Endothelial cell of umbilical vein (primary cell): ENCODE measurements at regions of chr12 and their contacts with region 1.

Region 1: GRCh38 chr12:56751712-56752598 is at the start of gene PRIM1:
- DNase-seq: peak; percentile 81
- H3K4me3 ChIP-seq: peak within 1 kb of the TSS; percentile 52 to 98 (median 94)
- H3K27ac ChIP-seq: peak within 1 kb of the TSS; percentile 75
- H3K4me1 ChIP-seq: peaks cover 11% of the 10 kb centered on the region
- H3K27me3 ChIP-seq: no peaks in the 10 kb centered on the region
- CTCF ChIP-seq: no peak
- POLR2A ChIP-seq: peak; percentile 62
- total RNA-seq, gene PRIM1: 12.1 and 13.4 TPM in 2 replicates

Region 2: GRCh38 chr12:56661560-56661959 is 90.4 kb before region 1 on chr12:
- CTCF ChIA-PET with region 1: no interaction called
- POLR2A ChIA-PET with region 1: no interaction called
- dilution Hi-C with region 1: no loop called
- intact Hi-C with region 1: no loop called
- DNase-seq: no peak
- H3K4me3 ChIP-seq: no peak overlapping the region
- H3K27ac ChIP-seq: no peak overlapping the region
- H3K4me1 ChIP-seq: no peaks in the 10 kb centered on the region
- H3K27me3 ChIP-seq: no peaks in the 10 kb centered on the region
- CTCF ChIP-seq: no peak
- POLR2A ChIP-seq: no peak

Region 3: DNA sequence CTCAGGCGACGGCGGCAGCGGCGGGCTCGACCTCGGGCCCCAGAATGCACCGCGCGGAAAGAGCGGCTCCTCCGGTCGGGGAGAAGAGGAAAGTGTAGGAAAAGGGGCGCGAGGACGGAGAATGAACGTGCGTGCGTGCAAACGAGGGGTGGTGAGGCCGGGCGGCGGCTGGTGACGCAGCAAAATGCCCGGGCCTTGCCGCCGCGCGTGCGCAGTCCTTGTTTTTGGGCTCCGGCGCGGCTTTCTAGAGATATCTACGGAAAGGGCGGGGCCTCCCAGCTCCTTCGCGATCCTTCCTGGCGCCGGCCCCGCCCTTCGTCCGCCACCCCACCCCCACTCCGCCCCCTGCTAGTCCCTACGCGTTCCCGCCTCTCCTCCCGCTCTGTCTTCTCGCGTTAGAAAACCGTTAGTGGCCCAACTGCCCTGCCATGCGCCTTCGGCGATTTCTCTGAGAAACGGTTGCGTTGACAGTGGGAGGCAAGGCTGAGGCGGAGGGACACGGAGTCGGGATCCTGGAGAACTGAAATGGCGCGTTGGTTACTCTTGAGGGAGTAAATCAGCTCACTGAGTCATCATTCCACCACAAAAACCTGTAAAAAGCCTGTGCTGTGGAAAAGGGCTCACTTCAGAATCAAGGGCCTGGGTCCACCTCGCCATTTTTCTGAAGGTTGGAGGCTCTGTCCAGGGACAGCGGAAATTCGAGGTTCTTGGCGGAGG is 63.7 kb before region 1 on chr12 and contains the start of gene PTGES3:
- CTCF ChIA-PET with region 1: interaction called, 3 read pairs
- POLR2A ChIA-PET with region 1: interaction called, 5 read pairs
- dilution Hi-C with region 1: no loop called
- intact Hi-C with region 1: loop called (anchors 2 kb)
- DNase-seq: peak; percentile 99
- H3K4me3 ChIP-seq: peak within 1 kb of the TSS; percentile 61 to 91 (median 84)
- H3K27ac ChIP-seq: peak within 1 kb of the TSS; percentile 90
- H3K4me1 ChIP-seq: peaks cover 27% of the 10 kb centered on the region
- H3K27me3 ChIP-seq: no peaks in the 10 kb centered on the region
- CTCF ChIP-seq: peak in 1 of 2 donors; percentile 3
- POLR2A ChIP-seq: peak; percentile 88
- total RNA-seq, gene PTGES3: 262 and 278 TPM in 2 replicates

Region 4: DNA sequence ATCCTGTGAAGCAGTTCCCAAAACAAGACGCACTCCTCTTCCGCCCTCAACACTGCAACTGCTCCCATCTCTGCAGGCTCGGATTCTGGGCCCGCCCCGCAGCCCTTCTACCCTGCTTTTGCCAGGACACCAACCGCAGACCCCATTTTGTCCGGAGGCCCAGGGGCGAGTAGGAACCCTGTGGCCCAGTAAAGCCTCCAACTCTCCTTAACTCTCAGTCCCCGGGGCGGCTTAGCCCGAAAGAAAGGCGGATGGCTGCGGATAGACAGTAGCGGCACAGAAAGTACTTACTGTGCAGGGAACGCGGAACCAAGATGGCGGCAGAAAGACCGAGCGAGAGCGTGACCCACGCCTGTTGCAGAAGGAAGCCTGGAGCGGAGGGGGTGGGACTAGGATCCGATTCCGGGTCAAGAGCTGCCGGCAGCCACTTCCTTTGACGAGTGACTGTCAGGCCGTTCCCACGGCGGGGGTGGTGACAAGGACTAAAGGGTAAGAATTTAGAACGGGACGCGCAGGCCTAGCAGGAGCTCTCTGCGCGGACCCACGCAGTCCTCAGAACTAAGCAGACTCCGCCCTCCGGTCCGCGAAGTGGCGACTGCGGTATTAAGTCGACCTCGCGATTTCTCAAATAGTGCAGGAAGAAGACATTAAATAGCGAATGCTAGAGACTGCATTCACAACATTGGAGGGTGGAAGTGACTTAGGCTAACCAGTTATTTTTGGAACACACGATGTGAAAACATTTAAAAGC is 26.8 kb before region 1 on chr12 and contains the start of gene NACA:
- CTCF ChIA-PET with region 1: no interaction called
- POLR2A ChIA-PET with region 1: interaction called, 3 read pairs
- dilution Hi-C with region 1: no loop called
- intact Hi-C with region 1: loop called (anchors 1 kb)
- DNase-seq: peak; percentile 99
- H3K4me3 ChIP-seq: peak within 1 kb of the TSS; percentile 85 to 90 (median 86)
- H3K27ac ChIP-seq: peak within 1 kb of the TSS; percentile 61
- H3K4me1 ChIP-seq: peaks cover 33% of the 10 kb centered on the region
- H3K27me3 ChIP-seq: no peaks in the 10 kb centered on the region
- CTCF ChIP-seq: no peak
- POLR2A ChIP-seq: peak; percentile 91
- total RNA-seq, gene NACA: 886 and 892 TPM in 2 replicates

Region 5: DNA sequence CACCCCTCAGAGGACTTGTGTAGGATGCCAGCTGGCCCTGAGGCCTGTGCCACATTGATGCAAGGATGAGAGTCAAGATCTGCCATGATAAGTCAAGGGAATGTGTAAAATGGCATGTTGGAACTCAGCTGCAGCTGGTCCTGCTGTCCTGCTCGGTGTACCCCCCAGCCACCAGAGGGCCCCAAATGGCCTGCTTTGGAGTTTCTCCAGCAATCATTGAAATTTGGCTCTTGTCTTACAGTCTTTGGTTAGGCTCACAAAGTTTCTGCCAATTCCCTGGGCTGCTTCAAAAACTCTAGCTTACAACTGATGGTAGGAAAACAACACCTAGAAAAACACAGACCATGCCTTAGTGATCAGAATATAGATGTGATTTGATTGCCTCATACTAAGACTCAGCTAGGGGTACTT is 88.0 kb after region 1 on chr12:
- CTCF ChIA-PET with region 1: no interaction called
- POLR2A ChIA-PET with region 1: no interaction called
- dilution Hi-C with region 1: no loop called
- intact Hi-C with region 1: no loop called
- DNase-seq: peak; percentile 45
- H3K4me3 ChIP-seq: no peak overlapping the region
- H3K27ac ChIP-seq: no peak overlapping the region
- H3K4me1 ChIP-seq: no peaks in the 10 kb centered on the region
- H3K27me3 ChIP-seq: peaks cover 13 to 20% of the 10 kb centered on the region in 2 experiments
- CTCF ChIP-seq: peak; percentile 43 to 66
- POLR2A ChIP-seq: no peak

Region 6: GRCh38 chr12:56987551-56988053 is 235.6 kb after region 1 on chr12:
- CTCF ChIA-PET with region 1: interaction called, 29 read pairs
- POLR2A ChIA-PET with region 1: no interaction called
- dilution Hi-C with region 1: no loop called
- intact Hi-C with region 1: loop called (anchors 1 kb)
- DNase-seq: peak; percentile 55
- H3K4me3 ChIP-seq: no peak overlapping the region
- H3K27ac ChIP-seq: peak overlapping the region; percentile 3
- H3K4me1 ChIP-seq: peaks cover 30% of the 10 kb centered on the region
- H3K27me3 ChIP-seq: peaks cover 2 to 3% of the 10 kb centered on the region in 2 experiments
- CTCF ChIP-seq: peak; percentile 93
- POLR2A ChIP-seq: no peak

Region 7: GRCh38 chr12:57063991-57064685 is 312.2 kb after region 1 on chr12:
- CTCF ChIA-PET with region 1: interaction called, 6 read pairs
- POLR2A ChIA-PET with region 1: no interaction called
- dilution Hi-C with region 1: no loop called
- intact Hi-C with region 1: loop called (anchors 1 kb)
- DNase-seq: no peak
- H3K4me3 ChIP-seq: no peak overlapping the region
- H3K27ac ChIP-seq: no peak overlapping the region
- H3K4me1 ChIP-seq: no peaks in the 10 kb centered on the region
- H3K27me3 ChIP-seq: no peaks in the 10 kb centered on the region
- CTCF ChIP-seq: no peak
- POLR2A ChIP-seq: no peak

Region 8: GRCh38 chr12:57546438-57547383 is 794.8 kb after region 1 on chr12 and contains the start of gene DCTN2:
- CTCF ChIA-PET with region 1: no interaction called
- POLR2A ChIA-PET with region 1: no interaction called
- dilution Hi-C with region 1: no loop called
- intact Hi-C with region 1: no loop called
- DNase-seq: peak; percentile 96
- H3K4me3 ChIP-seq: peak within 1 kb of the TSS; percentile 80 to 94 (median 82)
- H3K27ac ChIP-seq: peak within 1 kb of the TSS; percentile 77
- H3K4me1 ChIP-seq: peaks cover 18% of the 10 kb centered on the region
- H3K27me3 ChIP-seq: peaks cover 27 to 37% of the 10 kb centered on the region in 2 experiments
- CTCF ChIP-seq: no peak
- POLR2A ChIP-seq: no peak
- total RNA-seq, gene DCTN2: 157 and 161 TPM in 2 replicates